GM12878 (cell line): ENCODE measurements at regions of chr14 and their contacts with region 1.

Region 1: DNA sequence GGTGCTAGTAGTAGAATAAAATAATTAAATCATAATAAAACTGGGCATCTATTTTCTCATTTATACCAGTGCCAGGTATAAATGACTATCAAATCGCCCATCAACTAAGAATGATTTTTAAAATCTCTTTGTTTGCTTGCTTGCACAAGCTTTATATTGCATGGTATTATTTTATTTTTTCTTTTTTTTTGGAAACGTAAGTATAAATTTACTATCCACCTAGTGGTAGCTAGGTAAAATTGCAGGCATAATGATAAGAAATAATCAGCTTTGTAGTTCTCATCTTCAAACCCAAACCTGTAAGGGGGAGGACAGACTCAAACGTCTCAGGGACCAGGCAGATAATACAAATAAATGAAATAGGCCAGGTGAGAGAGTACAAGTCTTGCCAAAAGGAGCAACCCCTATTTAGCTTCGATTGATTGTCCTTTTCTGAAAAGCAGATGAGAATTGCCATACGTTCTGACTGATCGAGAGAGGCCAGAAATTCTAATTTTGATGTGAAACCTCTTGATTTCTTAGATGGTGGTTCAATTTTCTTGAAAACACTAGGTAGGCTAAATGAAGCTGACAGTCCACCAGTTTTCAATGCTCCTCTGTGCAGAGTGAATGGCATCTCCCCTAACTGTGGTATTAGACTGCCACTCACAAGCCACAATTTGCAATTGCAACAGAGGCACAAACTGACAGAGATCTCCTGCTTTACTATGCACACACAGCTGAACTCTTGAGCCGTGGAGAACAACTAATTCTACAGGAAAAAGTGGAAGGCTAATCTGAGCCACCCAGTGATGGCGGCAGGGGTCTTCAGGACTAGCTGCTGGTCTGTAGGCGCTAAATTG is 189.3 kb downstream of the DACT1 start:
- DNase-seq: no peak
- ATAC-seq: no peak
- H3K4me3 ChIP-seq: no peak overlapping the region
- H3K27ac ChIP-seq: no peak overlapping the region
- H3K4me1 ChIP-seq: no peaks in the 10 kb centered on the region
- H3K27me3 ChIP-seq: no peaks in the 10 kb centered on the region
- CTCF ChIP-seq: 0 out of 6 replicates have a peak, but pooled peaks of 1 of the 3 experiments have one; percentile 11
- EP300 ChIP-seq: no peak
- POLR2A ChIP-seq: no peak
- RAD21 ChIP-seq: no peak

Region 2: GRCh38 chr14:58439476-58439875 is 387.6 kb before region 1 on chr14:
- CTCF ChIA-PET with region 1: no interaction called
- POLR2A ChIA-PET with region 1: no interaction called
- RAD21 ChIA-PET with region 1: no interaction called
- SMC1A ChIA-PET with region 1: no interaction called
- in situ Hi-C with region 1: no loop called
- intact Hi-C with region 1: no loop called
- DNase-seq: no peak
- ATAC-seq: no peak
- H3K4me3 ChIP-seq: no peak overlapping the region
- H3K27ac ChIP-seq: no peak overlapping the region
- H3K4me1 ChIP-seq: no peaks in the 10 kb centered on the region
- H3K27me3 ChIP-seq: no peaks in the 10 kb centered on the region
- CTCF ChIP-seq: no peak
- EP300 ChIP-seq: no peak
- POLR2A ChIP-seq: no peak
- RAD21 ChIP-seq: no peak

Region 3: GRCh38 chr14:58815161-58815701 is 11.8 kb before region 1 on chr14:
- CTCF ChIA-PET with region 1: interaction called, 10 read pairs
- POLR2A ChIA-PET with region 1: interaction called, 3 read pairs
- RAD21 ChIA-PET with region 1: interaction called, 3 read pairs
- SMC1A ChIA-PET with region 1: interaction called, 13 read pairs
- in situ Hi-C with region 1: no loop called
- intact Hi-C with region 1: no loop called
- DNase-seq: no peak
- ATAC-seq: no peak
- H3K4me3 ChIP-seq: no peak overlapping the region
- H3K27ac ChIP-seq: no peak overlapping the region
- H3K4me1 ChIP-seq: no peaks in the 10 kb centered on the region
- H3K27me3 ChIP-seq: no peaks in the 10 kb centered on the region
- CTCF ChIP-seq: no peak
- EP300 ChIP-seq: no peak
- POLR2A ChIP-seq: no peak
- RAD21 ChIP-seq: no peak

Region 4: GRCh38 chr14:58846682-58847465 is 19.8 kb after region 1 on chr14:
- CTCF ChIA-PET with region 1: interaction called, 19 read pairs
- POLR2A ChIA-PET with region 1: interaction called, 8 read pairs
- RAD21 ChIA-PET with region 1: no interaction called
- SMC1A ChIA-PET with region 1: interaction called, 4 read pairs
- in situ Hi-C with region 1: no loop called
- intact Hi-C with region 1: no loop called
- DNase-seq: no peak
- ATAC-seq: peak; percentile 63
- H3K4me3 ChIP-seq: no peak overlapping the region
- H3K27ac ChIP-seq: no peak overlapping the region
- H3K4me1 ChIP-seq: no peaks in the 10 kb centered on the region
- H3K27me3 ChIP-seq: no peaks in the 10 kb centered on the region
- CTCF ChIP-seq: 0 out of 6 replicates have a peak, but pooled peaks of 1 of the 3 experiments have one; percentile 3
- EP300 ChIP-seq: no peak
- POLR2A ChIP-seq: no peak
- RAD21 ChIP-seq: no peak

Region 5: DNA sequence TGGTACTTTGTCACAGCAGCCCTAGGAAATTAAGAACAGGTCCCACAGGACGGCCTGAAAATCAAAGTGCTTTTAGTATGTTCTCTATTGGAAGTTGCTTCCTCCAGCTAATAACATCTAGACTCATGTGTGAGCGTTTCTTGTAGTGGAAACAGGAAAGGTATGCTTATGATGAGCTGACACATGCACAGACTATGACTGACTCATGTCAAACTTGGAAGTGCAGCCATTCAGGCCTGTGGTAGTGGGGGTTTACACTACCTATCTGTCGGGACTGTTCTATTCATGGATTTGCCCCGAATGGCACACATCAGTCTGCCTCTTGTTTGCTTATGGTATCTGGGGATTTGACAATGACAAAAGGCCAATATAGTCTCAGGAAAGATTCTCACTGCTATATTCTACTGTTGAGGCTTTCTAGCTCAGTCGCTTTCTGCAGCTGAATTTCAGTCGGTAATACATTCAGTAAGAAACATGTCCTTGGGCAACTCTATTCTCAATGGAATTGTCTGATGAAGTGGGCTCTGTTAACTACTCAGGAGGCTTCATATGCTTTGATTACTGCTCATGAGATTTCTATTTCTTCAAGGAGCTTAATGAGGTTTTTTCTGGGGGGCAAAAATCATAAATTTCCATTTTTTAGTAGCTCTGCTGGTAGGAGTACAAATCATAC is 91.1 kb after region 1 on chr14:
- CTCF ChIA-PET with region 1: no interaction called
- POLR2A ChIA-PET with region 1: no interaction called
- RAD21 ChIA-PET with region 1: no interaction called
- SMC1A ChIA-PET with region 1: no interaction called
- in situ Hi-C with region 1: no loop called
- intact Hi-C with region 1: no loop called
- DNase-seq: no peak
- ATAC-seq: no peak
- H3K4me3 ChIP-seq: no peak overlapping the region
- H3K27ac ChIP-seq: no peak overlapping the region
- H3K4me1 ChIP-seq: no peaks in the 10 kb centered on the region
- H3K27me3 ChIP-seq: no peaks in the 10 kb centered on the region
- CTCF ChIP-seq: no peak
- EP300 ChIP-seq: no peak
- POLR2A ChIP-seq: no peak
- RAD21 ChIP-seq: no peak